A673 (cell line): ENCODE measurements at regions of chr20 and their contacts with region 1.

Region 1: GRCh38 chr20:50737352-50737751 is 6.0 kb downstream of the PARD6B start:
- DNase-seq: no peak
- H3K4me3 ChIP-seq: no peak overlapping the region
- H3K27ac ChIP-seq: peak overlapping the region; percentile 57
- H3K4me1 ChIP-seq: peaks cover 57% of the 10 kb centered on the region
- H3K27me3 ChIP-seq: no peaks in the 10 kb centered on the region
- CTCF ChIP-seq: no peak

Region 2: GRCh38 chr20:50575847-50576720 is 161.3 kb before region 1 on chr20:
- CTCF ChIA-PET with region 1: no interaction called
- POLR2A ChIA-PET with region 1: no interaction called
- intact Hi-C with region 1: loop called (anchors 5 kb)
- DNase-seq: peak; percentile 72
- H3K4me3 ChIP-seq: no peak overlapping the region
- H3K27ac ChIP-seq: no peak overlapping the region
- H3K4me1 ChIP-seq: peaks cover 34% of the 10 kb centered on the region
- H3K27me3 ChIP-seq: no peaks in the 10 kb centered on the region
- CTCF ChIP-seq: peak; percentile 85